ENCODE measurements at regions of chr19 and their contacts with region 1.

Region 1: GRCh38 chr19:44576843-44577565 is 36.4 kb upstream of the IGSF23 start:
- DNase-seq: peak; percentile 78 to 79
- H3K4me3 ChIP-seq: no peak overlapping the region
- H3K4me3 Mint-ChIP-seq: no peak overlapping the region
- H3K27ac Mint-ChIP-seq: no peak overlapping the region
- H3K4me1 ChIP-seq: peaks cover 17% of the 10 kb centered on the region
- H3K4me1 Mint-ChIP-seq: peaks cover 34% of the 10 kb centered on the region
- H3K27me3 ChIP-seq: no peaks in the 10 kb centered on the region
- H3K27me3 Mint-ChIP-seq: no peaks in the 10 kb centered on the region
- CTCF ChIP-seq: peak; percentile 89 to 90

Region 2: DNA sequence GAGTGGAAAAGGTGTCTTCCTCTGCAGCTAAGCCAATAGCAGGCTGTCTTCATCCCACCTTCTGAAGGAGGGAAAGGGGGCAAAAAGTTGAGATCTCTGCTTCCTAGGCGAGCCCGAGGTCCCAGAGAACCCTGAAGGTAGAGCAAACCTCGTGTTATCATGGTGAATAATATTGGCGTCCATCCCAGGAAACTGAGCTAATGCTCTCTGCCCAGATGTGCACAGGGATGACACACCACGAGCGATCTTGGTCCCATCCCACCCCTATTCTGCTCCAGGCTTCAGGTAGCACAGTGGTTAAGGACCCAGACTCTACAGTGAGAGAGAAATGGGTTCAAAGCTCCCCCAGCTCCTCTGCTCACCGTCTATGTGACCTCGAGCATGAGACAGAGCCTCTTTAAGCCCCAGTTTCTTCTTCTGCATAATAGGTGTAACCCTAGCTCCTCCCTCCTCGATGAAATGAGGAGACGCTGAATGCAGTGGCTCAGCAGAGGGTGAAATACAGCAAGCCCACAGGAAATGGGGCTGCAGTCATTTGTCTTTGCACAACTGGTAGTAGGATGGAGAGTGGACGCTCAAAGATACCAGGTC is 37.7 kb before region 1 on chr19:
- CTCF ChIA-PET with region 1: no interaction called
- POLR2A ChIA-PET with region 1: no interaction called
- intact Hi-C with region 1: no loop called
- DNase-seq: no peak
- H3K4me3 ChIP-seq: no peak overlapping the region
- H3K4me3 Mint-ChIP-seq: no peak overlapping the region
- H3K27ac Mint-ChIP-seq: no peak overlapping the region
- H3K4me1 ChIP-seq: no peaks in the 10 kb centered on the region
- H3K4me1 Mint-ChIP-seq: no peaks in the 10 kb centered on the region
- H3K27me3 ChIP-seq: no peaks in the 10 kb centered on the region
- H3K27me3 Mint-ChIP-seq: peaks cover 3% of the 10 kb centered on the region
- CTCF ChIP-seq: no peak

Region 3: DNA sequence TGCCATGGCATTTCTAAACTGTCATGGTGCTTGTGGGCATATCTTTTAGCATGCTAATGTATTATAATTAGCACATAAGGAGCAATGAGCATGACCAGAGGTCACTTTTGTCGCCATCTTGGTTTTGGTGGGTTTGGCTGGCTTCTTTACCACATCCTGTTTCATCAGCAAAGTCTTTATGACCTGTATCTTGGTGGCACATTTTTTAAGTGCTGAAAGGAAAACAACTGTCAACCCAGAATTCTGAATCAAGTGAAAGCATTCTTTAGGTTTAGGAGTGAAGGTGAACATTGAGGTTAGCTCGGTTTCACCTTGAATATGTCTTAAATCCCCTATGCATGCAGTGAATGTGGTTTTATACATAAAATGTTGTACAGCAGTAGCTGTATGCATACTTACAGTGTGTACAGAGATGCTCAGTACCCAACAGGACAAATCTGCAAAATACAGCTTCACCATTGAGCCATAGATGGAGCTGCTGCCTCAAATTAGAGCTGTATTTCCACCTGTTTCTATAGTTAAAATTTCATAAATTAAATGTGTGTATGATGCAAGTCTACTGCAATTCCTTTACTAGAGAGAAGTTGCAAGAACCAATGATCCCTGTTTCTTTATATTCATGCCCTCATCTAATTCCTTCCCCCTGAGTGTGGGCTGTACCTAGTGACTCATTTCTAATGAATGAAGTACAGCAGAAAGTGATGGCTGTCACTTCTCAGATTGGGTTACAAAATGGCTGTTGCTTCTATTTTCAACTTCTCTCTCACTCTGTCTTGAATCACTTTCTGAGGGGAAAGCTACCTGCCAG is 11.2 kb after region 1 on chr19:
- CTCF ChIA-PET with region 1: interaction called, 20 read pairs
- POLR2A ChIA-PET with region 1: no interaction called
- intact Hi-C with region 1: no loop called
- DNase-seq: peak in 1 of 2 experiments; percentile 72
- H3K4me3 ChIP-seq: no peak overlapping the region
- H3K4me3 Mint-ChIP-seq: peak overlapping the region; percentile 67
- H3K27ac Mint-ChIP-seq: peak overlapping the region; percentile 99
- H3K4me1 ChIP-seq: peaks cover 57% of the 10 kb centered on the region
- H3K4me1 Mint-ChIP-seq: peaks cover 58% of the 10 kb centered on the region
- H3K27me3 ChIP-seq: no peaks in the 10 kb centered on the region
- H3K27me3 Mint-ChIP-seq: no peaks in the 10 kb centered on the region
- CTCF ChIP-seq: no peak

Region 4: DNA sequence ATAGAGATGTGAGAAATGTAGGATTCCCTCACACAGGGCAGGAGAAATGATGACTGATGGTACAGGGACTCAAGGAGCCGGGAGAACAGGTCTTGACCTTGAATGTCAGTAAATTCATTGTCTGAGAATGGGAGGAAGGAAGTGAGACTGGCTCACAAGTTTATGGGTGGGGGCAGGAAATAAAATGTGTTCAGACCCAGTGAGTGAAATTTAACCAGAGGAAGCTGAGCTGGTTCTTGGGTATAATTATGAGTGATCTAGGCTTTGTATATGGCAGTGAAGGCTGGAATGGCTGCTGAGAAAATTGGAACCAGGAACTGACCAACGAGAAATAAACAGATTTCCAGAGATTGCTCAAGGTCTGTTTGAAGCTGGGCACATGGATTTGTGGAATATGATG is 30.0 kb after region 1 on chr19:
- CTCF ChIA-PET with region 1: interaction called, 12 read pairs
- POLR2A ChIA-PET with region 1: no interaction called
- intact Hi-C with region 1: loop called (anchors 5 kb)
- DNase-seq: no peak
- H3K4me3 ChIP-seq: no peak overlapping the region
- H3K4me3 Mint-ChIP-seq: no peak overlapping the region
- H3K27ac Mint-ChIP-seq: no peak overlapping the region
- H3K4me1 ChIP-seq: peaks cover 38% of the 10 kb centered on the region
- H3K4me1 Mint-ChIP-seq: peaks cover 36% of the 10 kb centered on the region
- H3K27me3 ChIP-seq: no peaks in the 10 kb centered on the region
- H3K27me3 Mint-ChIP-seq: no peaks in the 10 kb centered on the region
- CTCF ChIP-seq: no peak

Region 5: DNA sequence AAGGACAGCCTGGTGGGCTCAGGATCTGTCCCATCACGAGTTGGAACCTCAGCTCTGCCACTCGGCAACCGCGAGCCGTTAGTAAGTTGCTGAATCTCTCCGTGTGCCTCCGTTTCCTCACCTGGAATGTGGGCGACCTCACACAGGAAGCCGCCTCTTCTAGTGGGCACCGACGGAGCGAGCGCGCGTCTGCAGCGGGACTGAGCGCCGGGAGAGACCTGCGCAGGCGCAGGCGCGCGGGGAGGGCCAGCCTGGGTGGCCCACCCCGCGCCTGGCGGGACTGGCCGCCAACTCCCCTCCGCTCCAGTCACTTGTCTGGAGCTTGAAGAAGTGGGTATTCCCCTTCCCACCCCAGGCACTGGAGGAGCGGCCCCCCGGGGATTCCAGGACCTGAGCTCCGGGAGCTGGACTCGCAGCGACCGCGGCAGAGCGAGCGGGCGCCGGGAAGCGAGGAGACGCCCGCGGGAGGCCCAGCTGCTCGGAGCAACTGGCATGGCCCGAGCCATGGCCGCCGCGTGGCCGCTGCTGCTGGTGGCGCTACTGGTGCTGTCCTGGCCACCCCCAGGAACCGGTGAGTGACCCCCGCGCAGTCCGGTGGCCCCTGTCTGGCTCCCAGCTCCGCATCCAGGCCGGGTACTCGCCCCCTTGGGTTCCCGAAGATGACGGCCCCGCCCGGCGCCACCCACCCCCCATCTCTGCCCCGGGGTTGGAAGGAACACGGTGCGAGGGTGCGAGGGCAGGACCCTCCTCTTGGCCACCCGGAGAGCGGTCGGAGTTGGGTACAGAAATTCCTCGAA is 66.8 kb after region 1 on chr19 and contains the start of gene PVR:
- CTCF ChIA-PET with region 1: interaction called, 16 read pairs
- POLR2A ChIA-PET with region 1: interaction called, 4 read pairs
- intact Hi-C with region 1: loop called (anchors 1 kb)
- DNase-seq: peak; percentile 76 to 85
- H3K4me3 ChIP-seq: peak within 1 kb of the TSS; percentile 91
- H3K4me3 Mint-ChIP-seq: peak within 1 kb of the TSS; percentile 83
- H3K27ac Mint-ChIP-seq: peak within 1 kb of the TSS; percentile 79
- H3K4me1 ChIP-seq: peaks cover 31% of the 10 kb centered on the region
- H3K4me1 Mint-ChIP-seq: peaks cover 27% of the 10 kb centered on the region
- H3K27me3 ChIP-seq: no peaks in the 10 kb centered on the region
- H3K27me3 Mint-ChIP-seq: no peaks in the 10 kb centered on the region
- CTCF ChIP-seq: no peak
- total RNA-seq, gene PVR: 86.5 and 93.8 TPM in 2 replicates

Region 6: GRCh38 chr19:44653977-44654774 is 77.2 kb after region 1 on chr19:
- CTCF ChIA-PET with region 1: interaction called, 34 read pairs
- POLR2A ChIA-PET with region 1: no interaction called
- intact Hi-C with region 1: loop called (anchors 1 kb)
- DNase-seq: peak in 1 of 2 experiments; percentile 54
- H3K4me3 ChIP-seq: no peak overlapping the region
- H3K4me3 Mint-ChIP-seq: no peak overlapping the region
- H3K27ac Mint-ChIP-seq: peak overlapping the region; percentile 31
- H3K4me1 ChIP-seq: no peaks in the 10 kb centered on the region
- H3K4me1 Mint-ChIP-seq: peaks cover 29% of the 10 kb centered on the region
- H3K27me3 ChIP-seq: no peaks in the 10 kb centered on the region
- H3K27me3 Mint-ChIP-seq: no peaks in the 10 kb centered on the region
- CTCF ChIP-seq: peak; percentile 20 to 58

Region 7: GRCh38 chr19:44689056-44689895 is 112.3 kb after region 1 on chr19:
- CTCF ChIA-PET with region 1: interaction called, 15 read pairs
- POLR2A ChIA-PET with region 1: no interaction called
- intact Hi-C with region 1: no loop called
- DNase-seq: peak; percentile 85 to 89
- H3K4me3 ChIP-seq: no peak overlapping the region
- H3K4me3 Mint-ChIP-seq: peak overlapping the region; percentile 7
- H3K27ac Mint-ChIP-seq: peak overlapping the region; percentile 5
- H3K4me1 ChIP-seq: peaks cover 31% of the 10 kb centered on the region
- H3K4me1 Mint-ChIP-seq: peaks cover 24% of the 10 kb centered on the region
- H3K27me3 ChIP-seq: no peaks in the 10 kb centered on the region
- H3K27me3 Mint-ChIP-seq: no peaks in the 10 kb centered on the region
- CTCF ChIP-seq: peak; percentile 97 to 99

Region 8: GRCh38 chr19:44993926-44994537 is 417.0 kb after region 1 on chr19:
- CTCF ChIA-PET with region 1: no interaction called
- POLR2A ChIA-PET with region 1: no interaction called
- intact Hi-C with region 1: no loop called
- DNase-seq: no peak
- H3K4me3 ChIP-seq: no peak overlapping the region
- H3K4me3 Mint-ChIP-seq: no peak overlapping the region
- H3K27ac Mint-ChIP-seq: no peak overlapping the region
- H3K4me1 ChIP-seq: no peaks in the 10 kb centered on the region
- H3K4me1 Mint-ChIP-seq: no peaks in the 10 kb centered on the region
- H3K27me3 ChIP-seq: no peaks in the 10 kb centered on the region
- H3K27me3 Mint-ChIP-seq: no peaks in the 10 kb centered on the region
- CTCF ChIP-seq: no peak